ENCODE measurements at regions of chr3 and their contacts with region 1.

Region 1: GRCh38 chr3:187919048-187919447 is 173.8 kb upstream of the BCL6 start:
- DNase-seq: peak; percentile 91
- H3K4me3 Mint-ChIP-seq: peak overlapping the region; percentile 76
- H3K27ac Mint-ChIP-seq: peak overlapping the region; percentile 96
- H3K4me1 Mint-ChIP-seq: peaks cover 71% of the 10 kb centered on the region
- H3K27me3 Mint-ChIP-seq: no peaks in the 10 kb centered on the region

Region 2: DNA sequence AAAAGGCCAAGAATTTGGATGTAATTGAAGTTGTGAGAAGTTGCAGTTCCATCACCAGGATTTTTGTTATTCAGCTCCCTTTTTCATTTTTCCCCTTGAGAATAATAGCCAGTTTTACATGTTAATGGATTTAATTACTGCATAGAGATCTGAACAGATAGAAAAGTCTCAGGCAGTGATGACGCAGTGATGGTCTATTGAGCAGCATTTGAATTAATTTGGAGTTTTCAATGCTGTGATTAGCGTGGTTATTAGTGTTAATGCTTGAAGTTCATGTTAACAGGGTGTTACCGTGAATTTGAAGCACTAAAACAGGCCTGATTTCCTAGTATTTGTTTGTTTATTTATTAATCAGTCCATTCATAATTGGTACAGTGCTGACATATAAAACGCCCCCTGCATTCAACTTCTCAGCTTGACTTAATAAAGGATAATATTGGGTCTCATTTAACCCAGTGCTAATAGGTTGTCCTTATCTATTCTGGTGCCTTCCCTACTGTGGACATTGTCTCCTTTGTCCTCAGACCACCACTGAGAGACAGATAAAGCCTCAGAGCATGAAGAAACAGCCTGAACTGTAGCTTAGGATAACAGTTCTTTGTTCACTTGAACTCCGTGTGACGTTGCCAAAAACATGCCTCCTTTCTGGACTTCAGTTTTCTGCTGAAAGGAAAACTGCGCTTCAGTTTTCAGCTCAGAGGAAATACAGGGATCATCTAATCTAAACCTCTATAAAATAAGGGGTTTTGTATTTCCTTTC is 468.4 kb before region 1 on chr3:
- intact Hi-C with region 1: no loop called
- DNase-seq: no peak
- H3K4me3 Mint-ChIP-seq: no peak overlapping the region
- H3K27ac Mint-ChIP-seq: no peak overlapping the region
- H3K4me1 Mint-ChIP-seq: no peaks in the 10 kb centered on the region
- H3K27me3 Mint-ChIP-seq: peaks cover 8% of the 10 kb centered on the region

Region 3: DNA sequence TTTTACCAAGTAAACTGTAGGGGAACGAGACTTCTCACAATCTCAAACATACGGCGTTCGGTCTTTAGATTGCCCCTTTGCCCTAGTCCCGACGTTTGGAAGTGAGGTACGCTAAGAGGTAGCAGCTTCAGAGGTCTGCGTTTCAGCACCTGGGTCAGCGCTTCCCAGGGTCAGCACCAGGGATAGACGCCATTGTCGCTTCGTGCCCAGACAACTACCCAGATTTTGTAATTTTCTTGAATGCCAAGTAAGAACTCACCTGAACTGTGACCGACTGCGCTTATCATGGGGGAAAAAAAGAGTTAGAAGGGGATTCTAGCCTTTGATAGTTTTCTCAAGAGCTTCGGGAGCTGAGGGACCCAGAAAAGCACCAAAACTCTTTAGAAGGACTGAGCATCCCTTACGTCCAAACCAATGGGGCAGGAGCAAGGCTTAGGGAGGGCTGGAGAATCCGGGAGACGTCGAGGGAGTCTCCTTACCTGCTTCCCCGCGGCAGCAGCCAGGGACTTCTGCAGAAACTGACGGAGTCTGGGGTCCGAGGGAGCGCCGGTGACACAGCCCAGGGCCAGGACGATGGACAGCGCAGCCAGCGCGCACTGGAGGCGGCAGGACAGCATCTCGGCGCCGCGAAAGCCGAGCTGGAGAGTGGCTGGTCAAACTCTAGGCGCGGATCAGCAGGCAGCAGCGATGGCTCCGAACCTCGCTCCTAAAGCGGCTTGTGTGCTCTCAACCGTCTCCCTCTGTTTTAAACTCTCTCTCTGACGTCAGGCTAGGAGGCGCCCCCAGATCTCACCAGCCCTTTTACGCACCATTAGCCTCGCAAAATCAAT is 249.2 kb before region 1 on chr3 and contains the start of gene SST:
- intact Hi-C with region 1: no loop called
- DNase-seq: peak; percentile 70
- H3K4me3 Mint-ChIP-seq: no peak within 1 kb of the TSS
- H3K27ac Mint-ChIP-seq: no peak within 1 kb of the TSS
- H3K4me1 Mint-ChIP-seq: no peaks in the 10 kb centered on the region
- H3K27me3 Mint-ChIP-seq: peaks cover 58% of the 10 kb centered on the region
- total RNA-seq, gene SST: not detected in 2 replicates

Region 4: GRCh38 chr3:187777331-187777941 is 141.6 kb before region 1 on chr3:
- intact Hi-C with region 1: loop called (anchors 1 kb)
- DNase-seq: peak; percentile 82
- H3K4me3 Mint-ChIP-seq: peak overlapping the region; percentile 58
- H3K27ac Mint-ChIP-seq: peak overlapping the region; percentile 93
- H3K4me1 Mint-ChIP-seq: peaks cover 48% of the 10 kb centered on the region
- H3K27me3 Mint-ChIP-seq: no peaks in the 10 kb centered on the region

Region 5: GRCh38 chr3:187963677-187964385 is 44.8 kb after region 1 on chr3:
- intact Hi-C with region 1: loop called (anchors 1 kb)
- DNase-seq: no peak
- H3K4me3 Mint-ChIP-seq: peak overlapping the region; percentile 31
- H3K27ac Mint-ChIP-seq: no peak overlapping the region
- H3K4me1 Mint-ChIP-seq: peaks cover 11% of the 10 kb centered on the region
- H3K27me3 Mint-ChIP-seq: peaks cover 6% of the 10 kb centered on the region

Region 6: DNA sequence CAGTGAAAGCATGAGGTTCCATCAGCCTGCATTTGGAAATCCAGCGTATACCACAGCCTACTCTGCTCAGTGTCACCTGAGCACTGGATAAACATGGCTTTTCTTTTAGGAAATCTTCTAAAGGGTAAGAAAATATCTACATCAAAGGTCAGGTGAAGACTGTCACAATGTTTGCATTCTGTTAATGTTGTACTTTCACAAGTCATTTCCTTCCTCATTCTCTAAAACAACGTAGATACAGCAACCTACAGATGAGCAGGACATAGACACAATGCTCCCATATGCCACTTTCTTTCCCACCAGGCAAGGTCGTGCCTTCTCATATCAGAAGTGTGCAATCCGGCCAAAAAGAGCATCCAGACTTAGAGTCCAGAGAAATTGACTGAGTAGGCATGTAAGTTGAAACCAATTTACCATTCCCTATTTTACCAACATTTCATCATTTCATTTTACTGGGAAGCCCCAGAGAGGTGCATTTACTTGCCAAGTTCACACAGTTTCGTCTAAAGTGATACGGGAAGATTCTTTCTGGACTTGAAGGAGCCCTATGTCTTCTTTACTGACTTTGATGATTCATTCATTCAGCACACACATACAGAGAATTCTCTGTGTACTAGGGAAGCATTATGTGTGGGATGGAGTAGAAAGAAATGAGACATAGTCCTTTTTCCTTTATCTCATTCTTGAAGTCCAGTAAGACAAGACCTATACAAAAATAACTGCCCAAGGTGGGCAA is 204.3 kb after region 1 on chr3:
- intact Hi-C with region 1: loop called (anchors 1 kb)
- DNase-seq: no peak
- H3K4me3 Mint-ChIP-seq: no peak overlapping the region
- H3K27ac Mint-ChIP-seq: peak overlapping the region; percentile 45
- H3K4me1 Mint-ChIP-seq: peaks cover 17% of the 10 kb centered on the region
- H3K27me3 Mint-ChIP-seq: peaks cover 5% of the 10 kb centered on the region

Region 7: GRCh38 chr3:188286087-188286513 is 367.1 kb after region 1 on chr3:
- intact Hi-C with region 1: loop called (anchors 1 kb)
- DNase-seq: no peak
- H3K4me3 Mint-ChIP-seq: peak overlapping the region; percentile 4
- H3K27ac Mint-ChIP-seq: peak overlapping the region; percentile 80
- H3K4me1 Mint-ChIP-seq: peaks cover 48% of the 10 kb centered on the region
- H3K27me3 Mint-ChIP-seq: no peaks in the 10 kb centered on the region

Region 8: DNA sequence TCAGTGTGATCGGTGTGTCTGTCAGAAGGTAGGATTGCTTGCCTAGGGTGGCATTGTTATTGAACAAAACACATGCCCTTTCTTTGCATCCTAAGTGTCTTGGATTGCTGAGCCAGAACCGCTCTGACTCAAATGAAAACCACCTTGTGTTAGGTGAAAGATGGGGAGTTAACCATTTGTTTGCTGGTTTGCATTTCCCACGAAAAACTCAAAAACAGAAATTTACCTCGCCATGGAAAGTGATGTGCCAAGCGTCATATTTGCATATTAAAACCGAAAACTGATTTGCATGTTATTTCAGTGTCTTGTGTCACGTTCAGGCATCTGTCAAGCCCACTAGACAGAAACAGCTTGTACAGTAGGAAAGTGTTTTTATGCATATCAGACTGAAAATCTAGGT is 778.1 kb after region 1 on chr3:
- intact Hi-C with region 1: loop called (anchors 1 kb)
- DNase-seq: no peak
- H3K4me3 Mint-ChIP-seq: no peak overlapping the region
- H3K27ac Mint-ChIP-seq: peak overlapping the region; percentile 12
- H3K4me1 Mint-ChIP-seq: peaks cover 24% of the 10 kb centered on the region
- H3K27me3 Mint-ChIP-seq: peaks cover 3% of the 10 kb centered on the region

Region 9: GRCh38 chr3:188954590-188955208 is 1035.7 kb after region 1 on chr3:
- intact Hi-C with region 1: loop called (anchors 5 kb)
- DNase-seq: peak; percentile 94
- H3K4me3 Mint-ChIP-seq: no peak overlapping the region
- H3K27ac Mint-ChIP-seq: peak overlapping the region; percentile 10
- H3K4me1 Mint-ChIP-seq: peaks cover 27% of the 10 kb centered on the region
- H3K27me3 Mint-ChIP-seq: peaks cover 6% of the 10 kb centered on the region